ENCODE measurements at regions of chr3 and their contacts with region 1.

Region 1: DNA sequence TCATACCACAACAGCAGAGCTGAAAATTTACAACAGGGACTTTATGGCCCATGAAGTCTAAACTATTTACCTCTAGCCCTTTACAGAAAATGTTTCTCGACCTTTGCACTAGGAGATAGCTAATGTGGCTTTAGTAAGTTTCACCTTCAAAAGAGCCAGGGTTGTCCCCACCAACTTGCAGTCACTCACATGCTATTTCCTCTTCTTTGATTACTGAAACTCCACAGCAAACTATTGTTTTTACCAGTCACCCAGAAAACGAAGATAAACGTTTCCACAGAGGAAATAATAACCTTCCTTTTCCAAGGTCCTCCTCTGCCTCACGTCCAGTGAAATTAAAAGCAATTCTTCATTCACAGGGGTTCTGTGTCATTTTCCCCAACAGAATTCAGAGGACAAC is 48.2 kb downstream of the WWTR1 start:
- DNase-seq: peak in 1 of 2 experiments; percentile 28
- H3K4me3 ChIP-seq: no peak overlapping the region
- H3K4me3 Mint-ChIP-seq: peak overlapping the region; percentile 33
- H3K27ac Mint-ChIP-seq: no peak overlapping the region
- H3K4me1 ChIP-seq: peaks cover 48% of the 10 kb centered on the region
- H3K4me1 Mint-ChIP-seq: peaks cover 26% of the 10 kb centered on the region
- H3K27me3 ChIP-seq: no peaks in the 10 kb centered on the region
- H3K27me3 Mint-ChIP-seq: no peaks in the 10 kb centered on the region
- CTCF ChIP-seq: no peak

Region 2: GRCh38 chr3:149640976-149641728 is 31.6 kb after region 1 on chr3:
- CTCF ChIA-PET with region 1: no interaction called
- POLR2A ChIA-PET with region 1: no interaction called
- intact Hi-C with region 1: loop called (anchors 5 kb)
- DNase-seq: peak in 1 of 2 experiments; percentile 14
- H3K4me3 ChIP-seq: no peak overlapping the region
- H3K4me3 Mint-ChIP-seq: no peak overlapping the region
- H3K27ac Mint-ChIP-seq: peak overlapping the region; percentile 29
- H3K4me1 ChIP-seq: peaks cover 23% of the 10 kb centered on the region
- H3K4me1 Mint-ChIP-seq: peaks cover 15% of the 10 kb centered on the region
- H3K27me3 ChIP-seq: no peaks in the 10 kb centered on the region
- H3K27me3 Mint-ChIP-seq: no peaks in the 10 kb centered on the region
- CTCF ChIP-seq: no peak

Measured in Caco-2 (cell line).